ENCODE measurements at regions of chr11 and their contacts with region 1.

Region 1: GRCh38 chr11:85854557-85855340 is 434 bp upstream of the CCDC83 start:
- DNase-seq: peak; percentile 72
- ATAC-seq: peak; percentile 97
- H3K4me3 ChIP-seq: peak overlapping the region; percentile 67 to 74
- H3K27ac ChIP-seq: peak overlapping the region; percentile 99
- H3K4me1 ChIP-seq: peaks cover 8% of the 10 kb centered on the region
- H3K27me3 ChIP-seq: no peaks in the 10 kb centered on the region
- CTCF ChIP-seq: peak; percentile 98

Region 2: DNA sequence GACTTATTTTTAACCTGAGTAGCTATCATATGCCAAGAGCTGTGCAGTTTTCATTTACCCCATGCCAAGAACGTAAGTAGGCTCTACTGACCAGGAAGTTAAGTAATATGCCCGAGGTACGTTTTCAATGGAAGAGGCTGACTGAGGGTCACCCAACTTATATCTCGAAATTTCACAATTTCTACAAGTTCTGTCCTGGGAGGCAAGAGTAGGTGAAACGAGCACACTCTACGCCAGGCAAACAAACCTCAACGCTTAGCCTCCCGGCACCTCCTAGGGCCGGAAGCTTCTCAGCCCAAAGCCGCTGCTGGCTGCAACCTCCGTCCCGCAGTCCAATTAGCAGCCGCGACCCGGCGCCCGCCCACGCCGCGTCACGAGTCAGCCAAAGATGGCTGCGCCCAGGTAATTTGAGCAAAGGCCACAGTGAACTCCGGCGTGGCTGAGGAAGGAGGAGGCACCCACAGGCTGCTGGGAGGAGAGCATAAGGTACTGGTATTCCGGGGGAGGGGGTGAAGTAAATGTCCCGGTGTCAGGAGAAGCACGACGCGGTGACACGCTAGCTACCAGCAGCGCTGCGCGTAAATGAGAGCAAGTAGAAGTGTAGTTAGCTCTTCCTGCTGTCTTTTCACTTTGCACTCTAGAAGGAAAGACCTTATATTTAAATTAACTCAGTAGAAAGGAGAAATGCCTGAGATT is 207.0 kb before region 1 on chr11 and contains the start of gene TMEM126A:
- CTCF ChIA-PET with region 1: interaction called, 10 read pairs
- POLR2A ChIA-PET with region 1: no interaction called
- in situ Hi-C with region 1: no loop called
- intact Hi-C with region 1: no loop called
- DNase-seq: peak; percentile 72
- ATAC-seq: peak; percentile 98
- H3K4me3 ChIP-seq: peak within 1 kb of the TSS; percentile 75 to 90
- H3K27ac ChIP-seq: peak within 1 kb of the TSS; percentile 97
- H3K4me1 ChIP-seq: peaks cover 22% of the 10 kb centered on the region
- H3K27me3 ChIP-seq: no peaks in the 10 kb centered on the region
- CTCF ChIP-seq: no peak
- total RNA-seq, gene TMEM126A: 50.9 TPM

Region 3: DNA sequence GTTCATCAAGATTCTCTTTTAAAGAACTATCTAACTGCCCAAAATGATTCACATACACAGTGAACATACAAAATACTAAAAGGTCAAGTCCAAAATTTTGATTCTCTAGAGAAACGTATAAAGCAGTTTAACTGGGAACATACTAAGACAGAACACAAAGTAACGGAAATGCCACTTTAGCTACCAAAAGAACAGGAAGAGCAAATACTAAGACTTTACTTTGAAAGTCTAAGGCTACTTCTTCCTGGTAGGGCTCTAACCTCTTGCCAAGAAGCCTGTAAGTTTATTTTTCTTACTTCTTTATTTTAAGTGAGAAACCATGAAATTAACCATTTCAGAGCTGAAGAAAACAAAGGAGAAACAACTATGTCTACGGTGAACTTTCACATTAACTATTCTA is 208.0 kb after region 1 on chr11:
- CTCF ChIA-PET with region 1: no interaction called
- POLR2A ChIA-PET with region 1: no interaction called
- in situ Hi-C with region 1: no loop called
- intact Hi-C with region 1: no loop called
- DNase-seq: no peak
- ATAC-seq: no peak
- H3K4me3 ChIP-seq: no peak overlapping the region
- H3K27ac ChIP-seq: no peak overlapping the region
- H3K4me1 ChIP-seq: peaks cover 47% of the 10 kb centered on the region
- H3K27me3 ChIP-seq: no peaks in the 10 kb centered on the region
- CTCF ChIP-seq: no peak

Region 4: DNA sequence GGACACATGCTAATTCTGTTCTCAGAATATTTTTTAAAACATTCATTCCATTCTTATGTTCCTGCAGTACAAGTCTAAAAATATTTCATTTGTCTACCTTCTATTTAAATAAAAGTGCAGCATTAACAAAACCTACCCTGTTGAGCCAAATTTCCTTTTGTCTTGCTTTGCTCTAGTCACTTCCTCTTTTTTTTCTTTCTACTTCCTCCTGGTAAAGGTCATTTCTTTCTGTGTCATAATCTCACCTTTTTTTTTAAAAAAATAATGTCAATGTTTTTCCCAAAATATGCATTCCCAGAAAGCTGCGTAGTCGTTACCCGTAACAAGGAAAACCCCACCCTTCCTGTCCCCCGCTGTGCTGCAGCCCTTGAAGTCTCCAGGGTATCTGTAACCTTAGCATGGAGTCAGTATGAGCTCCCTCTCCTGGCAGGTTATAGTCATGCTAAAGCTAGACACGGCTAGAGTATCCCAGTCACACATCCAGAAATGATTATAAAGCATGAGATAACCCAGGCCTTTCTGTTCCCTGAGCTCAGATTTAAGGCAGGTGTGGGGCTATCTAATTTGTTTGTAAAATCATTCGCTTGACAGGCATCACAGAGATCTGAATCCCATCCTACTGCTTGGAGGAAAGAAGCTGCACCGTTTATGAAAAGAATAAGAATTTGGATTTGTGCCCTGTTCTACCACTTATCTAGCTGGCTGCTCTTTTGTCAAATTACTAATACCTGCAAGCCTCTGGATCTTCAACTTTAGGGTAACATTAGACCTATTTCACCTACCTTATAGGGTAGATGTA is 338.7 kb after region 1 on chr11:
- CTCF ChIA-PET with region 1: interaction called, 6 read pairs
- POLR2A ChIA-PET with region 1: no interaction called
- in situ Hi-C with region 1: no loop called
- intact Hi-C with region 1: loop called (anchors 10 kb)
- DNase-seq: peak; percentile 67
- ATAC-seq: peak; percentile 100
- H3K4me3 ChIP-seq: peak overlapping the region; percentile 12 to 35; a peak in 3 of 4 replicates
- H3K27ac ChIP-seq: peak overlapping the region; percentile 51; the same call in 1 of the 2 replicates
- H3K4me1 ChIP-seq: peaks cover 9% of the 10 kb centered on the region; the same call in 1 of the 2 replicates
- H3K27me3 ChIP-seq: peaks cover 5% of the 10 kb centered on the region; the same call in 1 of the 2 replicates
- CTCF ChIP-seq: peak; percentile 90